Transverse colon (tissue), 4 donors: ENCODE measurements at regions of chr5 and their contacts with region 1.

Region 1: DNA sequence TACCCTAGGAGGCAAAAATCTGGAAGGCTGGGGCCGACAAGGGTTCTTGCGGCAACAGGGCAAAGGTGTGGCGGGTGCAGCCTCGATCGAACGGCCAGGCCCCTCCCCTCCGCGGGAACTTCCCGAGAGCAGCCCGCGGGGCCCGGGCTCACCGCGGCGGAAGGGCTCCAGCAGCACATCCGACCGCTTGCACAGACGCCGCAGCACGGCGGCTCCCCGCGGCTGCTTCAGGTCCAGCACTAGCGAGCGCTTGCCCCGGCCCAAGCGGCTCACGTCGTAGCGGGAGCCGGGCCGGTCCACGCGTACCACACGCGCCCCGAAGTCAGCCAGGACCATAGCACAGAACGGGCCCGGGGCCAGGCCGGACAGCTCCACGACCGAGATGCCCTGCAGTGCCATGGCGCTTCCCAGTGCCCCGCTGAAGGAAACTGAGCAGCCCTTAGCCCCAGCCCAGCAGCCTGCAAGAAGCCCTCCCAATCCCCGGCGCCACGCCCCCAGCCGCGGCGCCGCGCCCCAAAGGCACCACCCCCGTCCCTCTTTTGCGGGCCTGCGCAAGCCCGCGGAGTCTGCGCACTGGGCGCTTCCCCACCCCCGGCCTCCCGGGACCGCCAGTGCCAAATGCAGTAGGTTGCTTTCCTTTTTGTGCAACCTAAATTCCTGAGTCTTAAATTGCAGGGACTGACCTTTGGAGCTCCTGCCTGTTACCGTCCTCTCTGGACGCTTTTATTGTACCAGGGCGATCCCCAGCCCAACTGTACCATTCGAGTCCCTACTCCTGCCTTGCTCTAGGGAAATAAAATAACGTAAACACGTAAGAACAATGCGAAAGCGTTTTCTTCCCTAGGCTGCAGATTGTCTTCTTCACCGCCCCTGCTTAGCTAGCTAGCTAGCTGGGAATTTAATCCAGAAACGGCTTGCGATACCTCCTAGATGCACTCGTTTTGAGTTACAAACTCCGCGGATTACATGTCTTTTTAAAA is at the start of gene AMACR:
- DNase-seq: peak; percentile 97
- H3K4me3 ChIP-seq: peak within 1 kb of the TSS; percentile 56 to 70 (median 64)
- H3K27ac ChIP-seq: peak within 1 kb of the TSS; percentile 89 to 98 (median 97)
- H3K4me1 ChIP-seq: peaks cover 0 to 59% (median 27%) of the 10 kb centered on the region in 4 donors
- H3K27me3 ChIP-seq: no peaks in the 10 kb centered on the region
- CTCF ChIP-seq: no peak
- EP300 ChIP-seq: no peak
- POLR2A ChIP-seq: peak; percentile 93
- total RNA-seq, gene AMACR: 39.1 to 88.1 (median 70.6) TPM

Region 2: GRCh38 chr5:33736510-33736909 is 271.4 kb before region 1 on chr5:
- in situ Hi-C with region 1: no loop called
- intact Hi-C with region 1: no loop called
- DNase-seq: no peak
- H3K4me3 ChIP-seq: no peak overlapping the region
- H3K27ac ChIP-seq: no peak overlapping the region
- H3K4me1 ChIP-seq: no peaks in the 10 kb centered on the region
- H3K27me3 ChIP-seq: no peaks in the 10 kb centered on the region
- CTCF ChIP-seq: no peak
- EP300 ChIP-seq: no peak
- POLR2A ChIP-seq: no peak

Region 3: GRCh38 chr5:34042321-34042720 is 34.4 kb after region 1 on chr5:
- in situ Hi-C with region 1: no loop called
- intact Hi-C with region 1: no loop called
- DNase-seq: no peak
- H3K4me3 ChIP-seq: no peak overlapping the region
- H3K27ac ChIP-seq: peak overlapping the region in 3 of 4 donors; percentile 38 to 51 (median 47)
- H3K4me1 ChIP-seq: peaks cover 0 to 37% (median 7%) of the 10 kb centered on the region in 4 donors
- H3K27me3 ChIP-seq: no peaks in the 10 kb centered on the region
- CTCF ChIP-seq: no peak
- EP300 ChIP-seq: no peak
- POLR2A ChIP-seq: no peak

Region 4: GRCh38 chr5:34053133-34053532 is 45.2 kb after region 1 on chr5:
- in situ Hi-C with region 1: no loop called
- intact Hi-C with region 1: no loop called
- DNase-seq: no peak
- H3K4me3 ChIP-seq: no peak overlapping the region
- H3K27ac ChIP-seq: no peak overlapping the region
- H3K4me1 ChIP-seq: no peaks in the 10 kb centered on the region
- H3K27me3 ChIP-seq: no peaks in the 10 kb centered on the region
- CTCF ChIP-seq: no peak
- EP300 ChIP-seq: no peak
- POLR2A ChIP-seq: no peak

Region 5: DNA sequence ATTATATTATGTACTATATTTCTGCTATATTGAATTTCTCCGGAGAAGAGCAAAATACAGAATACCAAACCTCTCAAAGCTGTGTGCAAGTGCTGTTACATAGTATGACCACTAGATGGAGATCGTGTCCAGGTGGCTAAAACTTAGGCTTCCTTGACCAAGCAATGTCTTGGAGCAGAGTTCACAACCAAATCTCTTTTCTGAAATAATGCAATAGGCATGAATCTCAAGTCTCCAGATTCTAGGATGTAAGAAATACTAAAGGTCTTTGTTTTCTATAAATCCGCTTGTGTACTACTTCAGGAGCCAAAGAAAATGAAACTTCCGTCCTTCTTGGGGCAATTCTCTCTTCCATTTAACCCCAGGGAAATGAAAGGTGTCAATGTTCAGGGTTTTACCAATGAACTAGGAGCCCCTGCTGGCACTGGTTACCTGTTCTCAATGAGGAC is 466.7 kb after region 1 on chr5:
- in situ Hi-C with region 1: loop called in 1 of 4 experiments (anchors 25 kb)
- intact Hi-C with region 1: no loop called
- DNase-seq: no peak
- H3K4me3 ChIP-seq: no peak overlapping the region
- H3K27ac ChIP-seq: no peak overlapping the region
- H3K4me1 ChIP-seq: no peaks in the 10 kb centered on the region
- H3K27me3 ChIP-seq: no peaks in the 10 kb centered on the region
- CTCF ChIP-seq: peak; percentile 86 to 98 (median 95)
- EP300 ChIP-seq: no peak
- POLR2A ChIP-seq: no peak

Region 6: DNA sequence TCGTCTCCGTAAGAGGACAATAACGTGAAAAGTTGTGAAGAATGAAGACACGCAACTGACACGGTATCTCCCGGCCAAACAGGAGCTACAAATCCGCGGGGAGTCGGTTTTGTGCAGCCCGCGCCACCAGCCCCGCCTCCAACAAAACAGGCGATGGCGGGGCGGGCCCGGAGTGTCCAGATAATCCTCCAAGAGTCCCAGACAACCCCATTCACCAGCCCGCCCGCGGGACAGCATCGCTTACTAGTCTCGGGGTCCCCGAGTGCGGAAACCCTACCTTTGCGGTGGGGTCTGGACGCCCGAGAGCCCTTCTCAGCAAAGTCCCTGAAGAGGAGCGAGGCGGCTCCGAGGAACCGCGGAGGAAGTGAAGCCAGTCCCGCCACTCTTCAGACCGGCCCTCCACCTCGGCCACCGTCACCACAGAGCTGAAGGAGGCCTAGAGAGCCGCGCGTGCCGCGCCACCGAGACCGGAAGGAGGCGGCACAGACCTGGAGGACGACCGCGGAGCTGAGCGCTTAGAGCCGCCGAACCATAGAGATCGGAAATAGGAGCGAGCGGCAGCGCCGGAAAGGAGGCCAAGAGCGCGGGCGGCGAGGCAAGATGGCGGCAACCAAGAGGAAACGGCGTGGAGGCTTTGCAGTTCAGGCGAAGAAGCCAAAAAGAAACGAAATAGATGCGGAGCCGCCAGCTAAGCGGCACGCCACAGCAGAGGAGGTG is 907.4 kb after region 1 on chr5 and contains the starts of genes BRIX1 and RAD1:
- in situ Hi-C with region 1: loop called in 2 of 4 experiments (anchors 25 kb)
- intact Hi-C with region 1: no loop called
- DNase-seq: peak; percentile 97
- H3K4me3 ChIP-seq: peak within 1 kb of the TSS; percentile 89 to 99 (median 93)
- H3K27ac ChIP-seq: peak within 1 kb of the TSS; percentile 89 to 96 (median 92)
- H3K4me1 ChIP-seq: peaks cover 23 to 33% (median 26%) of the 10 kb centered on the region in 4 donors
- H3K27me3 ChIP-seq: no peaks in the 10 kb centered on the region
- CTCF ChIP-seq: peak in 2 of 5 experiments; percentile 11 to 18
- EP300 ChIP-seq: no peak
- POLR2A ChIP-seq: peak; percentile 85
- total RNA-seq, gene BRIX1: 1.5 to 15.6 (median 7.5) TPM
- total RNA-seq, gene RAD1: 9.0 to 14.4 (median 11.6) TPM

Region 7: GRCh38 chr5:35117967-35118366 is 1110.1 kb after region 1 on chr5:
- in situ Hi-C with region 1: no loop called
- intact Hi-C with region 1: no loop called
- DNase-seq: no peak
- H3K4me3 ChIP-seq: no peak overlapping the region
- H3K27ac ChIP-seq: no peak overlapping the region
- H3K4me1 ChIP-seq: peaks cover 0 to 12% (median 6%) of the 10 kb centered on the region in 4 donors
- H3K27me3 ChIP-seq: no peaks in the 10 kb centered on the region
- CTCF ChIP-seq: no peak
- EP300 ChIP-seq: no peak
- POLR2A ChIP-seq: no peak